Right lobe of liver (tissue), 6 donors: ENCODE measurements at regions of chr1 and their contacts with region 1.

Region 1: GRCh38 chr1:184982002-184982954 is 8.0 kb upstream of the NIBAN1 start:
- DNase-seq: peak; percentile 73 to 80 (median 74)
- ATAC-seq: peak; percentile 97 to 99 (median 99)
- H3K4me3 ChIP-seq: no peak overlapping the region
- H3K27ac ChIP-seq: no peak overlapping the region
- H3K4me1 ChIP-seq: no peaks in the 10 kb centered on the region
- H3K27me3 ChIP-seq: no peaks in the 10 kb centered on the region
- CTCF ChIP-seq: peak; percentile 79 to 97 (median 94)
- POLR2A ChIP-seq: no peak

Region 2: DNA sequence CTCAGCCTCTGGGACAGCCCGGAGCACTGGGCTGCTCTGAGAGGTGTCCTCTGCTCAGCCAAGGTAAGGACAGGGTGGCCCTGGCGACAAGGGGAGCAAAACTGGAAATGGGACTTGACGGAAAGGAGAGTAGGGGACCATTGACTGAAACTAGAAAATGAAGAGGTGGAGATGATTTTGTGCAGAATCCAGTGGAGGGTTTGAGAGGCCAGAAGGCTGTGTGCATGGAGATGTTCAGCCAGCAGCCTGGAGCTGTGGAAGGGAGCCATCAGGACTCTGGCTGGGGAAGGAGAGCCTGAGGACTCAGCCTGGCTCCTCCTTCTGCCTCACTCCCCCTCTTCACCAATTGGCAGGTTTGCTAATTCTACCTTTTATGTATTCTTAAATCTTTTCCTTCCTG is 341.8 kb before region 1 on chr1:
- intact Hi-C with region 1: no loop called
- DNase-seq: no peak
- ATAC-seq: peak in 1 of 4 donors; percentile 28
- H3K4me3 ChIP-seq: no peak overlapping the region
- H3K27ac ChIP-seq: no peak overlapping the region
- H3K4me1 ChIP-seq: peaks cover 0 to 5% (median 0%) of the 10 kb centered on the region in 4 donors
- H3K27me3 ChIP-seq: no peaks in the 10 kb centered on the region
- CTCF ChIP-seq: no peak
- POLR2A ChIP-seq: no peak

Region 3: DNA sequence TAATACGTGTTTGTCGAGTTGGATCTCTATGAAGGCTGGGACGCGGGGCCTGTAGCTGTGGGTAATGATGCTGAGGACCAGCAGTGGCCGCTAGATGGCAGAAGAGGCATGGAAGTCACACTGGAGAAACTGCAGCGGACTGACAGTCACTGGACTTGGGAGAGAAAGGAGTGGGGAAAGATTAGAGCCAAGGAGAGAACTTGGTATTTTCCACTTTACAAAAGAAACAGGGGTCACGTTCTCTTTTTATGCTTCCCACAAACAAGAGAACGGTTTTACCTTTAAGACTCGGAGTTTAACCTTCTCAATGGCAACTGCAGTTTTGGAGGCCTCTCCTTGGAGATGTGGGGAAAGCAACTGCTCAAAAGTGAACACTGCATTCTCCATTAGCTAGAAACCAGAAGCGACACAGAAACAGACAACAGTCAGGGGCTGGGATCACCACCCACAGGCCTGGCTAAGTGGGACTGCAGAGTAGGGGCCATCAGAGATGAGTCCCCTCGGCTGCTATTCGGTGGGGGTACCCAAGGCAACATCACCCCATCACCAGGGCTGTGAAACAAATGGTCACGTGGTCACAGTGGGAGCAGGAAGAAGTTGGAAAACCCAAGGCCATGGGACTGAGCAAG is 176.5 kb before region 1 on chr1:
- intact Hi-C with region 1: loop called in 1 of 2 experiments (anchors 5 kb)
- DNase-seq: peak; percentile 87 to 90 (median 89)
- ATAC-seq: peak; percentile 82 to 95 (median 90)
- H3K4me3 ChIP-seq: no peak overlapping the region
- H3K27ac ChIP-seq: no peak overlapping the region
- H3K4me1 ChIP-seq: peaks cover 0 to 20% (median 3%) of the 10 kb centered on the region in 4 donors
- H3K27me3 ChIP-seq: no peaks in the 10 kb centered on the region
- CTCF ChIP-seq: peak; percentile 91 to 96 (median 94)
- POLR2A ChIP-seq: no peak

Region 4: DNA sequence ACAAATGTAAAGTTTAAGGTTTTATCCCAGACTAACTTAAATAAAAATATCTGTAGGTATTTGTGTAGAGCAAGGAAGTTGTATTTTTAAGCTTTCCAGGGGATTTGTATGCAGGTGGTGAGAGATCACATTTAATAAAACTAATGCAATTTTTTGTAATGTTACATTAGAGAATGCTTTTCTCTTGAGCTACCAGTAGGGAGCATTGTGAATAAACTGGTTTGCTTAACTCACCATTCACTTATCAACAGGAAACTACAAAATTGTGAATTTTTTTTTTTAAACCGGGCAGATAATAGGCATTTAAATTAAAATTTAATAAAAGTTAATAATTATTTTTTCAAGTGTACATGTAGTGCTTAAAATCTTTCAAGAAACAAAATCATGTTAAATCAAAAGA is 256.2 kb after region 1 on chr1:
- intact Hi-C with region 1: no loop called
- DNase-seq: no peak
- ATAC-seq: peak in 2 of 4 donors; percentile 39 to 58
- H3K4me3 ChIP-seq: no peak overlapping the region
- H3K27ac ChIP-seq: no peak overlapping the region
- H3K4me1 ChIP-seq: no peaks in the 10 kb centered on the region
- H3K27me3 ChIP-seq: no peaks in the 10 kb centered on the region
- CTCF ChIP-seq: peak; percentile 30 to 57 (median 48)
- POLR2A ChIP-seq: no peak